ENCODE measurements at regions of chr14 and their contacts with region 1.

Region 1: DNA sequence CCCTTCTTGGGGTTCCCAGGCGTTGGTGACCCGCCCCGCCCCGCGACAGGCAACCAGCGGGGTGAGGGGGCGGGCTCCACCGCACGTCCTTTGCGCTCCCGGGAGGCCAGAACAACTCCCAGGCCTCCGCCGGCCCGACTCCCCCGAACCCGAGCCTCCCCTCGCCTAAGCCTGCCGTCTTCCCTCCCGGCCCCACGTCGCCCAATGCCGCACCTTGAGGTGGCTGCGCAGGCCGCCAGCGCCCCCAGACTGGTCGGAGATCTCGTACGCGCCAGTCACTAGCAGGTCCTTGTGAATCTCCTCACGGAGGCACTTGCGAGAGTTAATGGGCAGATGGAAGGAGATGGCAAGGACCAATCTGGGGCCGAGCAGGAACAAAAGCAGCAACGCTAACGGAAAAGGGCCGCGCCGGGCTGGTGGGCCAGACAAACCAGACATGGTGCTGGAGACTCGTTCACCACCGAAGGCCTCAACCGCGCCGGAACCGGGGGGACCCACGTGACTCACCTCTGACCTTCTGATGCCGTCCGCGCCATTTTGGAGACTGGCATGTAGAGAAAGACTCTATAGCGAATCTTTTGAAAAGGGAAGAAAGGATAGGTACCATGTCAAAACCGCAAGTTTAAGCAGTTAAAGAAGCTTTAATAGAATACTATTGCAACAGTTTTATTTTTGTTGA is at the start of gene TMED10:
- DNase-seq: peak; percentile 78
- ATAC-seq: peak; percentile 80
- H3K4me3 ChIP-seq: peak within 1 kb of the TSS; percentile 67 to 88
- H3K27ac ChIP-seq: peak within 1 kb of the TSS; percentile 93
- H3K4me1 ChIP-seq: peaks cover 2 to 13% of the 10 kb centered on the region in 2 experiments; a peak in 2 of 4 replicates
- H3K27me3 ChIP-seq: no peaks in the 10 kb centered on the region
- CTCF ChIP-seq: no peak
- POLR2A ChIP-seq: peak; percentile 59
- RAD21 ChIP-seq: no peak
- total RNA-seq, gene TMED10: 303 TPM

Region 2: GRCh38 chr14:75077794-75078193 is 98.5 kb before region 1 on chr14:
- CTCF ChIA-PET with region 1: no interaction called
- POLR2A ChIA-PET with region 1: no interaction called
- RAD21 ChIA-PET with region 1: no interaction called
- intact Hi-C with region 1: no loop called
- DNase-seq: no peak
- ATAC-seq: no peak
- H3K4me3 ChIP-seq: no peak overlapping the region
- H3K27ac ChIP-seq: no peak overlapping the region
- H3K4me1 ChIP-seq: no peaks in the 10 kb centered on the region
- H3K27me3 ChIP-seq: no peaks in the 10 kb centered on the region
- CTCF ChIP-seq: no peak
- POLR2A ChIP-seq: no peak
- RAD21 ChIP-seq: no peak

Region 3: DNA sequence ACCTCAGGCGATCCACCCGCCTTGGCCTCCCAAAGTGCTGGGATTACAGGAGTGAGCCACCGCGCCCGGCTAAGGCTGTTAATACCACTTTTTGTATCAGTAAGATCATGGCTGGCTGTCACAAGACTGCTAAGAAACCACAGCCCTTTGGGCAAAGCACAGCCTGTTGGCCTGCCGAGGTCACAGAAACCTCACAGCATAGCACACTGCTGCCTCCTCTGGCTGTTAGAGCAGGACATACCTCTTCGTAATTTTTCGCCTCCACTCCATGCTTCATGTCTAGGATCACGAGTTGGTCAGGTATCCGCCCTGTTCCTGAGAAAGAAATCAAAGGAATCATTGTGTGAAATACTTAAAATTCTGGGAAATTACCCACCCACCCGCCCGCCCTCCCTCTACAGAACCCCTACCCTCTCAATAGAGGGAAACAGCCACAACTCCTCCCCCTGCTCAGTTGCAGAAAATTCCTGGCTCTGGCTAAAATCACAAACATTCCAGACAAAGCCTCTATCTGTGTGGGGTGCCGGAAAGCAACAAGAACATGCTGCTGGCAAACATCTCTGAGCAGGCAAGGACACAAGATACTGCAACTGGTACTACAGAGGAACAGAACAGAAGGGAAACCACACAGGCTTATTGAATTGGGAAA is 28.7 kb before region 1 on chr14:
- CTCF ChIA-PET with region 1: no interaction called
- POLR2A ChIA-PET with region 1: no interaction called
- RAD21 ChIA-PET with region 1: no interaction called
- intact Hi-C with region 1: no loop called
- DNase-seq: no peak
- ATAC-seq: peak; percentile 75
- H3K4me3 ChIP-seq: no peak overlapping the region
- H3K27ac ChIP-seq: no peak overlapping the region
- H3K4me1 ChIP-seq: no peaks in the 10 kb centered on the region
- H3K27me3 ChIP-seq: no peaks in the 10 kb centered on the region
- CTCF ChIP-seq: 0 out of 6 replicates have a peak, but pooled peaks of 1 of the 3 experiments have one; percentile 13
- POLR2A ChIP-seq: no peak
- RAD21 ChIP-seq: no peak

Region 4: GRCh38 chr14:75198291-75198933 is 22.1 kb after region 1 on chr14:
- CTCF ChIA-PET with region 1: no interaction called
- POLR2A ChIA-PET with region 1: no interaction called
- RAD21 ChIA-PET with region 1: no interaction called
- intact Hi-C with region 1: loop called (anchors 1 kb)
- DNase-seq: no peak
- ATAC-seq: no peak
- H3K4me3 ChIP-seq: no peak overlapping the region
- H3K27ac ChIP-seq: no peak overlapping the region
- H3K4me1 ChIP-seq: peaks cover 14 to 26% of the 10 kb centered on the region in 2 experiments; a peak in 3 of 4 replicates
- H3K27me3 ChIP-seq: no peaks in the 10 kb centered on the region
- CTCF ChIP-seq: no peak
- POLR2A ChIP-seq: no peak
- RAD21 ChIP-seq: no peak

Region 5: GRCh38 chr14:75258615-75259466 is 82.6 kb after region 1 on chr14:
- CTCF ChIA-PET with region 1: no interaction called
- POLR2A ChIA-PET with region 1: no interaction called
- RAD21 ChIA-PET with region 1: no interaction called
- intact Hi-C with region 1: loop called (anchors 2 kb)
- DNase-seq: peak; percentile 99
- ATAC-seq: peak; percentile 96
- H3K4me3 ChIP-seq: peak overlapping the region; percentile 37 to 50
- H3K27ac ChIP-seq: peak overlapping the region; percentile 56
- H3K4me1 ChIP-seq: peaks cover 17 to 40% of the 10 kb centered on the region in 2 experiments
- H3K27me3 ChIP-seq: no peaks in the 10 kb centered on the region
- CTCF ChIP-seq: no peak
- POLR2A ChIP-seq: no peak
- RAD21 ChIP-seq: no peak

Region 6: DNA sequence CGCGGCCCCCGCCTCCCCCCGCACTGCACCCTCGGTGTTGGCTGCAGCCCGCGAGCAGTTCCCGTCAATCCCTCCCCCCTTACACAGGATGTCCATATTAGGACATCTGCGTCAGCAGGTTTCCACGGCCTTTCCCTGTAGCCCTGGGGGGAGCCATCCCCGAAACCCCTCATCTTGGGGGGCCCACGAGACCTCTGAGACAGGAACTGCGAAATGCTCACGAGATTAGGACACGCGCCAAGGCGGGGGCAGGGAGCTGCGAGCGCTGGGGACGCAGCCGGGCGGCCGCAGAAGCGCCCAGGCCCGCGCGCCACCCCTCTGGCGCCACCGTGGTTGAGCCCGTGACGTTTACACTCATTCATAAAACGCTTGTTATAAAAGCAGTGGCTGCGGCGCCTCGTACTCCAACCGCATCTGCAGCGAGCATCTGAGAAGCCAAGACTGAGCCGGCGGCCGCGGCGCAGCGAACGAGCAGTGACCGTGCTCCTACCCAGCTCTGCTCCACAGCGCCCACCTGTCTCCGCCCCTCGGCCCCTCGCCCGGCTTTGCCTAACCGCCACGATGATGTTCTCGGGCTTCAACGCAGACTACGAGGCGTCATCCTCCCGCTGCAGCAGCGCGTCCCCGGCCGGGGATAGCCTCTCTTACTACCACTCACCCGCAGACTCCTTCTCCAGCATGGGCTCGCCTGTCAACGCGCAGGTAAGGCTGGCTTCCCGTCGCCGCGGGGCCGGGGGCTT is 102.3 kb after region 1 on chr14 and contains the start of gene FOS:
- CTCF ChIA-PET with region 1: no interaction called
- POLR2A ChIA-PET with region 1: no interaction called
- RAD21 ChIA-PET with region 1: no interaction called
- intact Hi-C with region 1: loop called (anchors 1 kb)
- DNase-seq: peak; percentile 92
- ATAC-seq: peak; percentile 83
- H3K4me3 ChIP-seq: peak within 1 kb of the TSS; percentile 95 to 97
- H3K27ac ChIP-seq: peak within 1 kb of the TSS; percentile 70
- H3K4me1 ChIP-seq: peaks cover 10 to 39% of the 10 kb centered on the region in 2 experiments
- H3K27me3 ChIP-seq: no peaks in the 10 kb centered on the region
- CTCF ChIP-seq: no peak
- POLR2A ChIP-seq: peak; percentile 98
- RAD21 ChIP-seq: no peak
- total RNA-seq, gene FOS: 50.4 TPM

Measured in HCT116 (cell line).